CD8-positive, alpha-beta memory T cell (primary cell): ENCODE measurements at regions of chr12 and their contacts with region 1.

Region 1: GRCh38 chr12:6470375-6471163 is at the start of gene VAMP1:
- DNase-seq: peak; percentile 94 to 97 (median 95)
- H3K4me3 ChIP-seq: peak within 1 kb of the TSS; percentile 86
- H3K4me3 Mint-ChIP-seq: peak within 1 kb of the TSS; percentile 89 to 97 (median 93)
- H3K27ac ChIP-seq: peak within 1 kb of the TSS; percentile 63
- H3K27ac Mint-ChIP-seq: peak within 1 kb of the TSS; percentile 90 to 97 (median 96)
- H3K4me1 ChIP-seq: peaks cover 35% of the 10 kb centered on the region
- H3K4me1 Mint-ChIP-seq: peaks cover 46 to 52% (median 47%) of the 10 kb centered on the region in 3 donors
- H3K27me3 ChIP-seq: no peaks in the 10 kb centered on the region
- H3K27me3 Mint-ChIP-seq: no peaks in the 10 kb centered on the region
- total RNA-seq, gene VAMP1: 26.7 to 29.6 TPM

Region 2: GRCh38 chr12:6434205-6435140 is 36.1 kb before region 1 on chr12:
- CTCF ChIA-PET with region 1: interaction called, 23 read pairs
- POLR2A ChIA-PET with region 1: interaction called, 4 read pairs
- DNase-seq: peak in 4 of 5 donors; percentile 17 to 66 (median 44)
- H3K4me3 ChIP-seq: no peak overlapping the region
- H3K4me3 Mint-ChIP-seq: peak overlapping the region; percentile 31 to 73 (median 63)
- H3K27ac ChIP-seq: peak overlapping the region; percentile 11
- H3K27ac Mint-ChIP-seq: peak overlapping the region; percentile 79 to 96 (median 89)
- H3K4me1 ChIP-seq: peaks cover 43% of the 10 kb centered on the region
- H3K4me1 Mint-ChIP-seq: peaks cover 40 to 43% (median 42%) of the 10 kb centered on the region in 3 donors
- H3K27me3 ChIP-seq: no peaks in the 10 kb centered on the region
- H3K27me3 Mint-ChIP-seq: no peaks in the 10 kb centered on the region

Region 3: DNA sequence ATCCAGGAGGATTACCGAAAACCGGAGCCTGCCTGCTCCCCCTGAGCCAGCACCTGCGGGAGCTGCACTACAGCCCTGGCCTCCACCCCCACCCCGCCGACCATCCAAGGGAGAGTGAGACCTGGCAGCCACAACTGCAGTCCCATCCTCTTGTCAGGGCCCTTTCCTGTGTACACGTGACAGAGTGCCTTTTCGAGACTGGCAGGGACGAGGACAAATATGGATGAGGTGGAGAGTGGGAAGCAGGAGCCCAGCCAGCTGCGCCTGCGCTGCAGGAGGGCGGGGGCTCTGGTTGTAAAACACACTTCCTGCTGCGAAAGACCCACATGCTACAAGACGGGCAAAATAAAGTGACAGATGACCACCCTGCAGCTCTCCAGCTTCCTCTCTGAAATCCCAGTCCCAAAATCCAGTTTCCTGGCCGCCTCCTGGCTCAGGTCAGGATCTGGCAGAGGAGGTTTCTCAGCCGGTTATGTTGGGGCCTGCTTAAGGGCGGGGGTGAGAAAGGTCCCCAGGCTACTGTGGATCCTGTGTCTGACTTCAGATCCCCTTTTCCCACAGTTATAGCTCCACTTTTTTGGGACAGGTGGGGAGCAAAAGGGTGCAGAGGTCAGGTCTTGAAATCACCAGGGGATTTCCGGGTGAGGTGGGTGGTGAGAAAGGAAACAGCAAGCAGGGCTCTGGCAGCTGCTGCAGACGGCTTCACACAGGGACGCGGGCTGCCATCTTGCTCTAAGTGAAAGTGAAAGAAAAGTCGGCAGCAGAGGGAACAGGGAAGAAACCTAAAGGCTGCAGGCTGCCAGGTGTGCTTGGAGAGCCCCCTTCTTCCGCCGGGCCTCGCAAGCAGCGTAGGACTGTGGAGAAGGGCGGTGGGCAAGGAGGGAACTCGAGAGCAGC is 19.0 kb before region 1 on chr12 and contains the start of gene TAPBPL:
- CTCF ChIA-PET with region 1: interaction called, 179 read pairs
- POLR2A ChIA-PET with region 1: interaction called, 109 read pairs
- DNase-seq: peak; percentile 77 to 90 (median 86)
- H3K4me3 ChIP-seq: peak within 1 kb of the TSS; percentile 96
- H3K4me3 Mint-ChIP-seq: peak within 1 kb of the TSS; percentile 94 to 100 (median 99)
- H3K27ac ChIP-seq: peak within 1 kb of the TSS; percentile 93
- H3K27ac Mint-ChIP-seq: peak within 1 kb of the TSS; percentile 91 to 100 (median 98)
- H3K4me1 ChIP-seq: peaks cover 59% of the 10 kb centered on the region
- H3K4me1 Mint-ChIP-seq: peaks cover 71 to 82% (median 76%) of the 10 kb centered on the region in 3 donors
- H3K27me3 ChIP-seq: no peaks in the 10 kb centered on the region
- H3K27me3 Mint-ChIP-seq: no peaks in the 10 kb centered on the region
- total RNA-seq, gene TAPBPL: 29.1 to 32.0 TPM

Region 4: DNA sequence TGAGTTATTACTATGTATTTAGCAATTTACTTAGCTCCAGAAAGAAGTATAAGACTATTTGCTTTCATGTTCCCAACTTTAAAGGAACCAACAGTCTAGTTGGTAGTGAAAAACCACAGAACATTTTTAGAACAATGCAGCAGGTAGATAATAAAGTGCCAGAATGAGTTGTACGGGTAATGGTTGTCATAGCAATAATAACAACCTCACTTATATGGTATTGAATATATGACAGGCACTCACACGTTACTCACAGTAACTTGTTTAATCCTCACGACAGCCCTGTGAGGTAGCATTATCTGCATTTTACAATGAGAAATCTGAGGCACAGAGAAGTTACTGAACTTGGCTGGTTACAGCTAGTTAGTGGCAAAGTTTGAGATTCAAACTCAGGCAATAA is 53.1 kb after region 1 on chr12:
- CTCF ChIA-PET with region 1: no interaction called
- POLR2A ChIA-PET with region 1: no interaction called
- DNase-seq: no peak
- H3K4me3 ChIP-seq: no peak overlapping the region
- H3K4me3 Mint-ChIP-seq: no peak overlapping the region
- H3K27ac ChIP-seq: no peak overlapping the region
- H3K27ac Mint-ChIP-seq: peak overlapping the region in 4 of 8 donors; percentile 14 to 80 (median 78)
- H3K4me1 ChIP-seq: no peaks in the 10 kb centered on the region
- H3K4me1 Mint-ChIP-seq: peaks cover 0 to 5% (median 0%) of the 10 kb centered on the region in 3 donors
- H3K27me3 ChIP-seq: no peaks in the 10 kb centered on the region
- H3K27me3 Mint-ChIP-seq: no peaks in the 10 kb centered on the region

Region 5: DNA sequence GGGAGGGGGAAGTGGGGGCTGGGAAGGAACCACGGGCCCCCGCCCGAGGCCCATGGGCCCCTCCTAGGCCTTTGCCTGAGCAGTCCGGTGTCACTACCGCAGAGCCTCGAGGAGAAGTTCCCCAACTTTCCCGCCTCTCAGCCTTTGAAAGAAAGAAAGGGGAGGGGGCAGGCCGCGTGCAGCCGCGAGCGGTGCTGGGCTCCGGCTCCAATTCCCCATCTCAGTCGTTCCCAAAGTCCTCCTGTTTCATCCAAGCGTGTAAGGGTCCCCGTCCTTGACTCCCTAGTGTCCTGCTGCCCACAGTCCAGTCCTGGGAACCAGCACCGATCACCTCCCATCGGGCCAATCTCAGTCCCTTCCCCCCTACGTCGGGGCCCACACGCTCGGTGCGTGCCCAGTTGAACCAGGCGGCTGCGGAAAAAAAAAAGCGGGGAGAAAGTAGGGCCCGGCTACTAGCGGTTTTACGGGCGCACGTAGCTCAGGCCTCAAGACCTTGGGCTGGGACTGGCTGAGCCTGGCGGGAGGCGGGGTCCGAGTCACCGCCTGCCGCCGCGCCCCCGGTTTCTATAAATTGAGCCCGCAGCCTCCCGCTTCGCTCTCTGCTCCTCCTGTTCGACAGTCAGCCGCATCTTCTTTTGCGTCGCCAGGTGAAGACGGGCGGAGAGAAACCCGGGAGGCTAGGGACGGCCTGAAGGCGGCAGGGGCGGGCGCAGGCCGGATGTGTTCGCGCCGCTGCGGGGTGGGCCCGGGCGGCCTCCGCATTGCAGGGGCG is 63.5 kb after region 1 on chr12 and contains the start of gene GAPDH:
- CTCF ChIA-PET with region 1: interaction called, 33 read pairs
- POLR2A ChIA-PET with region 1: interaction called, 24 read pairs
- DNase-seq: peak; percentile 78 to 93 (median 86)
- H3K4me3 ChIP-seq: peak within 1 kb of the TSS; percentile 92
- H3K4me3 Mint-ChIP-seq: peak within 1 kb of the TSS; percentile 89 to 97 (median 93)
- H3K27ac ChIP-seq: peak within 1 kb of the TSS; percentile 95
- H3K27ac Mint-ChIP-seq: peak within 1 kb of the TSS; percentile 96 to 99 (median 98)
- H3K4me1 ChIP-seq: peaks cover 59% of the 10 kb centered on the region
- H3K4me1 Mint-ChIP-seq: peaks cover 49 to 57% (median 52%) of the 10 kb centered on the region in 3 donors
- H3K27me3 ChIP-seq: no peaks in the 10 kb centered on the region
- H3K27me3 Mint-ChIP-seq: peaks cover 0 to 5% of the 10 kb centered on the region in 2 donors
- total RNA-seq, gene GAPDH: 7,182 to 7,238 TPM

Region 6: GRCh38 chr12:6613776-6614512 is 143.4 kb after region 1 on chr12:
- CTCF ChIA-PET with region 1: no interaction called
- POLR2A ChIA-PET with region 1: no interaction called
- DNase-seq: peak; percentile 48 to 84 (median 55)
- H3K4me3 ChIP-seq: no peak overlapping the region
- H3K4me3 Mint-ChIP-seq: peak overlapping the region in 2 of 7 donors; percentile 36 to 72
- H3K27ac ChIP-seq: peak overlapping the region; percentile 67
- H3K27ac Mint-ChIP-seq: peak overlapping the region; percentile 63 to 93 (median 88)
- H3K4me1 ChIP-seq: peaks cover 24% of the 10 kb centered on the region
- H3K4me1 Mint-ChIP-seq: peaks cover 36 to 55% (median 43%) of the 10 kb centered on the region in 3 donors
- H3K27me3 ChIP-seq: no peaks in the 10 kb centered on the region
- H3K27me3 Mint-ChIP-seq: no peaks in the 10 kb centered on the region

Region 7: GRCh38 chr12:6778574-6779550 is 308.3 kb after region 1 on chr12:
- CTCF ChIA-PET with region 1: no interaction called
- POLR2A ChIA-PET with region 1: no interaction called
- DNase-seq: peak; percentile 81 to 92 (median 85)
- H3K4me3 ChIP-seq: peak overlapping the region; percentile 63
- H3K4me3 Mint-ChIP-seq: peak overlapping the region; percentile 74 to 93 (median 77)
- H3K27ac ChIP-seq: no peak overlapping the region
- H3K27ac Mint-ChIP-seq: peak overlapping the region; percentile 54 to 95 (median 86)
- H3K4me1 ChIP-seq: peaks cover 60% of the 10 kb centered on the region
- H3K4me1 Mint-ChIP-seq: peaks cover 35 to 44% (median 40%) of the 10 kb centered on the region in 3 donors
- H3K27me3 ChIP-seq: no peaks in the 10 kb centered on the region
- H3K27me3 Mint-ChIP-seq: peaks cover 0 to 7% of the 10 kb centered on the region in 2 donors